Panc1 (cell line): ENCODE measurements at regions of chr6 and their contacts with region 1.

Region 1: GRCh38 chr6:163419413-163420288 is 5.1 kb downstream of the QKI start:
- DNase-seq: no peak
- ATAC-seq: no peak
- H3K4me3 ChIP-seq: no peak overlapping the region
- H3K27ac ChIP-seq: no peak overlapping the region
- H3K4me1 ChIP-seq: peaks cover 46% of the 10 kb centered on the region
- H3K27me3 ChIP-seq: no peaks in the 10 kb centered on the region
- CTCF ChIP-seq: no peak

Region 2: DNA sequence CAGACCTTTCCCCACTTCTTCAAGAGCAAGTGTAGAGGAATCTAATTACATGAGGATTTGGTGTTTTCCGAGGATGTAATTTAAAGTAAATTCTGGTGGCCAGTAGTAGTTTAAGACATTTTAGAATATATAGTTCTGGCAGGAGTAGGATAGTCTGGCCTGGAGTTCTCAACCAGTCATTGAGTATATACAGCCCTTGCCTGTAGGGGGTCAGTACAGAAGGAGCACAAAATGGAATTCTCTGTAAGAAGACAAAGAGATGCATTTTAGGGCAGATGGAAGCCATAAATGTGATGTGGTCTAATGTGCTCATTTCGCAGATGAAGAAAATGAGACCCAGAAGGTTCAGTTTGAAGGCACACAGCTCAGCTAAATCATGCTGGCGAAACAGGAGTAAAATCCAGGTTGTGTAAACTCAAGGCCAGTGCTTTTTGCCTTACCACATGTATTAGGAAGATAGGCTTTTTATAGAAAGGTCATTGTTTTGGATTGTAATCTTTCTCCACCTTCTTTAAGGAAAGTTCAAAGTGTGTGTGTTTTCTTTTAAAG is 24.4 kb after region 1 on chr6:
- CTCF ChIA-PET with region 1: no interaction called
- POLR2A ChIA-PET with region 1: no interaction called
- in situ Hi-C with region 1: no loop called
- intact Hi-C with region 1: no loop called
- DNase-seq: no peak
- ATAC-seq: peak; percentile 62; the same call in 1 of the 2 replicates
- H3K4me3 ChIP-seq: no peak overlapping the region
- H3K27ac ChIP-seq: no peak overlapping the region
- H3K4me1 ChIP-seq: peaks cover 14% of the 10 kb centered on the region; the same call in 1 of the 2 replicates
- H3K27me3 ChIP-seq: no peaks in the 10 kb centered on the region
- CTCF ChIP-seq: 0 out of 2 replicates have a peak, but pooled peaks have one; percentile 13

Region 3: DNA sequence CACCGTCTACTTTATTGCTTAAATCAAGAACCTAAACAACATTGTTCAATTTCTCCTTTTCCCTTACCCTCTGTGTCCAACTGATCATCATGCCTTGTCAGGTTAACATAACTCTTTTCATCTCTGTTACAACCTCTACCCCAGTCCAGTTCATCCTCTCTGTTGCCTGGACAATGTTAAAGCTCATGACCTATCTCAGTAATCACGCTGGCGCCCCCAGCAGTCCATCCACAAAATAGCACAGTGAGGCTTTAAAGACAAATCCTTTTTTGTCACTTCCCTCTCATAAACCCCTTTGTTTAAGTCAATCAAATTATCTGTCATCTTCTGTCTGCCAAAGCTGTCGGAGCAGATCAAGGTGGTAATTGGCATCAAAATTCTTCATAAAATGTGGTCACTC is 135.0 kb after region 1 on chr6:
- CTCF ChIA-PET with region 1: no interaction called
- POLR2A ChIA-PET with region 1: no interaction called
- in situ Hi-C with region 1: no loop called
- intact Hi-C with region 1: loop called (anchors 5 kb)
- DNase-seq: no peak
- ATAC-seq: peak; percentile 73; the same call in 1 of the 2 replicates
- H3K4me3 ChIP-seq: no peak overlapping the region
- H3K27ac ChIP-seq: no peak overlapping the region
- H3K4me1 ChIP-seq: no peaks in the 10 kb centered on the region
- H3K27me3 ChIP-seq: no peaks in the 10 kb centered on the region
- CTCF ChIP-seq: peak; percentile 75